ENCODE measurements at regions of chr14 and their contacts with region 1.

Region 1: DNA sequence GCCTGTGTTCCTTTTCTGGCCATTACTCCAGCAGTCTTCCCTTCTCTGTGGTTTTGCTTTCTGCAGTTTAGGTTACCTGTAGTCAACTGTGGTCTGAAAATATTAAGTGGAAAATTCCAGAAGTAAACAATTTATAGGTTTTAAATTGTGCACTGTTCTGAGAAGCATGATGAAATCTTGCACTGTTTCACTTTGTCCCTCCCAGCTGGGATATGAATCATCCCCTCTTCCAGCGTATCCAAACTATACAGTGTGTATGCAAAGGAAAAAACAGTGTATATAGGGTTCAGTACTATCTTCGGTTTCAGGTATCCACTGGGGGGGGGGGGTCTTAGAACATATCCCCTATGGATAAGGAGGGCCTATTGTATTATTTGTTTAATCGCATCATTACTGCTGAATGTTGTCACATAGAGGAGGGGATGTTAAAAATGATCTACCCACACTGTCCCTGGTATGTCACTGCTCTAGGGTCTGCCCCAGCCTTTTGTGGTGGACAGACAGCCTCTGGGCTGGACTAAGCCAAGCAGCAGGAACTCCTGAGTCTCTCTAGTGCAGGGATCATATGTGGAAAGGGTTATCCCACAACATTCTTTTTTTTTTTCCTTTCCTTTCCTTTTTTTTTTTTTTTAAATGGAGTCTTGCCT is 109.1 kb upstream of the MAX start:
- DNase-seq: no peak
- ATAC-seq: no peak
- H3K4me3 ChIP-seq: no peak overlapping the region
- H3K27ac ChIP-seq: peak overlapping the region in 1 of 10 donors; percentile 59
- H3K4me1 ChIP-seq: peaks cover 0 to 64% (median 0%) of the 10 kb centered on the region in 9 donors
- H3K27me3 ChIP-seq: no peaks in the 10 kb centered on the region
- CTCF ChIP-seq: no peak

Region 2: DNA sequence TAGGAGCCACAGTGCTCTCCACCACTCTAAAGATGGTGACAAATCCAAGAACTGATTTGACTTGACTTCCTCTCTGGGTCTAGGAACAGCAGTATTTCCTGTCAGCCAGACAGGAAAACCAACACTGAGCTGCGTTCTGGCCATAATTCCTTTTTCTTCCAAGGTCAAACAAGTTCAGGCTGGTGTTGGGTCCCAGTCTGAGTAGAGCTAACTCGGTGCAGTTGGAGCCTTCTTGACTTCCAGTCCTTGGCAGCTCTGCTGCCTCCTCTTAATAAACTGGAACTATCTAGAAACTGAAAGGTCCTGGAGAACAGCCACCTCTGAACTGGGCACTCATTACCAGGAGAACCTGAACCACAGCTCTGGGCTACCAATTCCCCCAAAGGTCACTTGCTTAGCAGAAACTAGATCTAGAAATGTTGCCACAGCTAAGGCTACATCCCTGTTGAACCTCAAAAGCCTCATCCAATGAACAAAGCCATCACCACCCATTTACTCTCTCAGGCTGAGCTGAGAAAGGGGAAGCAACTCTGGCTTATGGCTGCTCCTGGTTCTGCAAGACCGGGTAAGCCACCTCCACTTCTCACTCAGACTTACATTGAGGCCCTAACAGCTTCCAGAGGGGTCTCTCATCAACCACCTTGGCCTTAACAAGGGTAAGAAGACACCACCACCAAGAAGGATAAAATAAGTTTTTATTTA is 136.9 kb before region 1 on chr14:
- intact Hi-C with region 1: no loop called
- DNase-seq: no peak
- ATAC-seq: peak in 7 of 8 donors; percentile 2 to 52 (median 12)
- H3K4me3 ChIP-seq: no peak overlapping the region
- H3K27ac ChIP-seq: peak overlapping the region in 9 of 10 donors; percentile 32 to 84 (median 75)
- H3K4me1 ChIP-seq: peaks cover 12 to 79% (median 74%) of the 10 kb centered on the region in 9 donors
- H3K27me3 ChIP-seq: no peaks in the 10 kb centered on the region
- CTCF ChIP-seq: no peak

Region 3: GRCh38 chr14:65373679-65374039 is 162.2 kb after region 1 on chr14:
- intact Hi-C with region 1: no loop called
- DNase-seq: no peak
- ATAC-seq: peak in 2 of 8 donors; percentile 45 to 47
- H3K4me3 ChIP-seq: no peak overlapping the region
- H3K27ac ChIP-seq: no peak overlapping the region
- H3K4me1 ChIP-seq: peaks cover 0 to 11% (median 0%) of the 10 kb centered on the region in 9 donors
- H3K27me3 ChIP-seq: peaks cover 0 to 12% (median 5%) of the 10 kb centered on the region in 7 donors
- CTCF ChIP-seq: peak in 1 of 9 donors; percentile 27

Region 4: GRCh38 chr14:65704850-65705249 is 493.4 kb after region 1 on chr14:
- intact Hi-C with region 1: loop called in 1 of 10 experiments (anchors 10 kb)
- DNase-seq: no peak
- ATAC-seq: peak in 3 of 8 donors; percentile 44 to 57 (median 55)
- H3K4me3 ChIP-seq: no peak overlapping the region
- H3K27ac ChIP-seq: no peak overlapping the region
- H3K4me1 ChIP-seq: peaks cover 0 to 13% (median 0%) of the 10 kb centered on the region in 9 donors
- H3K27me3 ChIP-seq: no peaks in the 10 kb centered on the region
- CTCF ChIP-seq: no peak